Dendritic cell treated with granulocyte-macrophage colony-stimulating factor and Interleukin-4, amounts not matched to agents 40 ng/mL and 50 ng/mL, for 4 days (primary cell): ENCODE measurements at regions of chr10 and their contacts with region 1.

Region 1: GRCh38 chr10:48708144-48708543 is 23.5 kb downstream of the WDFY4 start:
- H3K4me3 Mint-ChIP-seq: no peak overlapping the region
- H3K27ac Mint-ChIP-seq: peak overlapping the region; percentile 78
- H3K4me1 Mint-ChIP-seq: peaks cover 88% of the 10 kb centered on the region
- H3K27me3 Mint-ChIP-seq: no peaks in the 10 kb centered on the region

Region 2: GRCh38 chr10:48384699-48384982 is 323.5 kb before region 1 on chr10:
- intact Hi-C with region 1: no loop called
- H3K4me3 Mint-ChIP-seq: no peak overlapping the region
- H3K27ac Mint-ChIP-seq: no peak overlapping the region
- H3K4me1 Mint-ChIP-seq: peaks cover 3% of the 10 kb centered on the region
- H3K27me3 Mint-ChIP-seq: no peaks in the 10 kb centered on the region

Region 3: DNA sequence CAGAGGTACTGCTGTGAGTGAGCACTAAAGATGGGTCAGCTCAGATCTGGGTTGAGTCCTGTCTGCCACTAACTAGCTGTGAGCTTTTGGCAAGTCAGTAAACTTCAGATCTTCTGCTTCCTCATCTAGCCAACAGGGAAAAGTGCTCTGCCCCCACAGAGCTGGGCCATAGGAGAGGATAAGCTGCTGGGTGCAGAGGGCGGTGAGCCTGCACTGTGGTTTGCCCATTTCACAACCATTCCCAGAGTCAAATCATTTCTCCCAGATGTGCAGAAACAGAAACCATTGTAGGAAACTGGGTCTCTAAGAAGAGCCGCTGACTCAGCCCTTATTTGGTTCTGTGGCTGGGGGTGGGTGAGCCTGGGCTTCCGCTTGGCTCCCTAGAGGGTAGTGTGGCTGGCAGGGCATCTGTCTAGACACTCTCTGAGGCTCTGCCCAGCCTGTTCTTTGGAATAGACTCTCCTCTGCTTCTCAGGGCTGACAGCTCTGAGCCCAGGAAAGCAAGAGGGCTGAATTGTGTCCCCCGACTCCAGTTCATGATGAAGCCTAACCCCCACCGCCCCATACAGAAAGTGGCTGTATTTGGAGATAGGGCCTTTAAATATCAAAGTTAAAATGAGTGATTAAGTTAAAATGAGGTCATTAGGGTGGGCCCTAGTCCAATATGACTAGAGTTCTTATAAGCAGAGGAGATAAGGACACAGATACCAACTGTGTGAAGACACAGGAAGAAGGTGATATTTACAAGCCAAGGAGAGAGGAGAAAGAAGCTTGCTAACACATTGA is 73.8 kb before region 1 on chr10:
- intact Hi-C with region 1: no loop called
- H3K4me3 Mint-ChIP-seq: peak overlapping the region; percentile 46
- H3K27ac Mint-ChIP-seq: peak overlapping the region; percentile 93
- H3K4me1 Mint-ChIP-seq: peaks cover 90% of the 10 kb centered on the region
- H3K27me3 Mint-ChIP-seq: peaks cover 4% of the 10 kb centered on the region

Region 4: GRCh38 chr10:48684792-48685623 is 23.1 kb before region 1 on chr10 and contains the start of gene WDFY4:
- intact Hi-C with region 1: loop called (anchors 2 kb)
- H3K4me3 Mint-ChIP-seq: peak within 1 kb of the TSS; percentile 84
- H3K27ac Mint-ChIP-seq: peak within 1 kb of the TSS; percentile 98
- H3K4me1 Mint-ChIP-seq: peaks cover 47% of the 10 kb centered on the region
- H3K27me3 Mint-ChIP-seq: no peaks in the 10 kb centered on the region

Region 5: GRCh38 chr10:49071160-49071761 is 363.1 kb after region 1 on chr10:
- intact Hi-C with region 1: no loop called
- H3K4me3 Mint-ChIP-seq: no peak overlapping the region
- H3K27ac Mint-ChIP-seq: no peak overlapping the region
- H3K4me1 Mint-ChIP-seq: peaks cover under 1% of the 10 kb centered on the region
- H3K27me3 Mint-ChIP-seq: peaks cover 3% of the 10 kb centered on the region